ENCODE measurements at regions of chr14 and their contacts with region 1.

Region 1: DNA sequence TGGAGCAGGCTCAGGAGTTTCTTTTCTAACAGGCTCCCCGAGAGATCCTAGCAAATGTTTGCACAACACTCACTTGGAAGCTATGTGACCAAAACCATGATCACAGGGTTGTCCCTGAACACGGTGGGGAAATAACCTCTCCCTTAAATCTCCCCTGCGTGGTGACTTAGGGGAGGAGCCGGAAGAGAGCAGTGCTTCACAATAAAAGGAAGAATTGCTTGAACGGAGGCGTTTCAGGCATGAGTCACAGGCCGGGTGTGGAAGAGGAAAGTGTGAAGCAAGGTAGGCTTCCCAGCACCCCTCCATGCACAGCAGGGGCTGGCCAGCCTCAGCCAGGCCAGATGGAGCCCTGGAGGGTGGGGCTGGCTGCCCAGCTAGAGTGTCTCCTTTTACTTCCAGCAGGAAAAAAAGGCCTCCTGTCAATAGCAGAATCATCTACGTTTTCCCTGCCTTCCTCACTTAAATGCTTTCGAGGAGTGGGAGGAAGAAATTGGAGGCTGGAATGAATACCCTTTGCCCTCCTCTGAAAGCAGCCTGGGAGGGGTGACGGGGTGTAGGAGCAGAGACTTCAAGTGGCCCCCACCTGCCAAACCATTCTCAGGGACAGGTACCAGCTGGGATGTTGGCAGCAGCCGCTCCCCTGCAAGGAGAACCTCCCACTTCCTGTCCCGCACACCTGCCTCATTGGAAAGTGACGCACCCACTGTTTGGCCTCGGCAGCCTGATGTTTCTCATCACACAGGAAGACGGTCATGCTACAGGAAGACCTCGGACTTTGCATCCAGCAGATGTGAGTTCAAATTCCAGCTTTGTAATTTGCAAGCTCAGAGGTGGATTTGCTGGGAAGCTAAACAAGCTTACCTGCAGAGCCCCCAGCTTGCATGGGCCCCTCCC is 30.1 kb upstream of the PPP2R5C start:
- DNase-seq: peak; percentile 89
- H3K4me3 Mint-ChIP-seq: peak overlapping the region; percentile 60
- H3K27ac Mint-ChIP-seq: peak overlapping the region; percentile 97
- H3K4me1 Mint-ChIP-seq: peaks cover 17% of the 10 kb centered on the region
- H3K27me3 Mint-ChIP-seq: no peaks in the 10 kb centered on the region
- CTCF ChIP-seq: no peak

Region 2: GRCh38 chr14:101707068-101707842 is 24.2 kb before region 1 on chr14:
- CTCF ChIA-PET with region 1: interaction called, 12 read pairs
- intact Hi-C with region 1: no loop called
- DNase-seq: peak; percentile 62
- H3K4me3 Mint-ChIP-seq: no peak overlapping the region
- H3K27ac Mint-ChIP-seq: no peak overlapping the region
- H3K4me1 Mint-ChIP-seq: peaks cover 19% of the 10 kb centered on the region
- H3K27me3 Mint-ChIP-seq: no peaks in the 10 kb centered on the region
- CTCF ChIP-seq: peak; percentile 77

Region 3: GRCh38 chr14:101761032-101761880 is 29.8 kb after region 1 on chr14 and contains the start of gene PPP2R5C:
- CTCF ChIA-PET with region 1: interaction called, 10 read pairs
- intact Hi-C with region 1: no loop called
- DNase-seq: peak; percentile 88
- H3K4me3 Mint-ChIP-seq: peak within 1 kb of the TSS; percentile 78
- H3K27ac Mint-ChIP-seq: peak within 1 kb of the TSS; percentile 39
- H3K4me1 Mint-ChIP-seq: peaks cover 7% of the 10 kb centered on the region
- H3K27me3 Mint-ChIP-seq: peaks cover 34% of the 10 kb centered on the region
- CTCF ChIP-seq: no peak
- total RNA-seq, gene PPP2R5C: 108 and 120 TPM in 2 replicates

Region 4: GRCh38 chr14:101961011-101961721 is 229.7 kb after region 1 on chr14:
- CTCF ChIA-PET with region 1: no interaction called
- intact Hi-C with region 1: no loop called
- DNase-seq: peak; percentile 80
- H3K4me3 Mint-ChIP-seq: no peak overlapping the region
- H3K27ac Mint-ChIP-seq: no peak overlapping the region
- H3K4me1 Mint-ChIP-seq: peaks cover 38% of the 10 kb centered on the region
- H3K27me3 Mint-ChIP-seq: no peaks in the 10 kb centered on the region
- CTCF ChIP-seq: peak; percentile 76

Measured in Calu3 (cell line).